A549 (cell line): ENCODE measurements at regions of chr2 and their contacts with region 1.

Region 1: GRCh38 chr2:18378020-18378653 is 182.3 kb downstream of the RDH14 start:
- DNase-seq: peak; percentile 54 to 55
- ATAC-seq: peak; percentile 78 to 95
- H3K4me3 ChIP-seq: no peak overlapping the region
- H3K27ac ChIP-seq: 0 out of 6 replicates have a peak overlapping the region, but pooled peaks of 1 of the 2 experiments have one; percentile 20
- H3K4me1 ChIP-seq: peaks cover 3% of the 10 kb centered on the region; the same call in 1 of the 3 replicates
- CTCF ChIP-seq: peak; percentile 96
- EP300 ChIP-seq: no peak
- POLR2A ChIP-seq: no peak
- RAD21 ChIP-seq: peak; percentile 97

Region 2: DNA sequence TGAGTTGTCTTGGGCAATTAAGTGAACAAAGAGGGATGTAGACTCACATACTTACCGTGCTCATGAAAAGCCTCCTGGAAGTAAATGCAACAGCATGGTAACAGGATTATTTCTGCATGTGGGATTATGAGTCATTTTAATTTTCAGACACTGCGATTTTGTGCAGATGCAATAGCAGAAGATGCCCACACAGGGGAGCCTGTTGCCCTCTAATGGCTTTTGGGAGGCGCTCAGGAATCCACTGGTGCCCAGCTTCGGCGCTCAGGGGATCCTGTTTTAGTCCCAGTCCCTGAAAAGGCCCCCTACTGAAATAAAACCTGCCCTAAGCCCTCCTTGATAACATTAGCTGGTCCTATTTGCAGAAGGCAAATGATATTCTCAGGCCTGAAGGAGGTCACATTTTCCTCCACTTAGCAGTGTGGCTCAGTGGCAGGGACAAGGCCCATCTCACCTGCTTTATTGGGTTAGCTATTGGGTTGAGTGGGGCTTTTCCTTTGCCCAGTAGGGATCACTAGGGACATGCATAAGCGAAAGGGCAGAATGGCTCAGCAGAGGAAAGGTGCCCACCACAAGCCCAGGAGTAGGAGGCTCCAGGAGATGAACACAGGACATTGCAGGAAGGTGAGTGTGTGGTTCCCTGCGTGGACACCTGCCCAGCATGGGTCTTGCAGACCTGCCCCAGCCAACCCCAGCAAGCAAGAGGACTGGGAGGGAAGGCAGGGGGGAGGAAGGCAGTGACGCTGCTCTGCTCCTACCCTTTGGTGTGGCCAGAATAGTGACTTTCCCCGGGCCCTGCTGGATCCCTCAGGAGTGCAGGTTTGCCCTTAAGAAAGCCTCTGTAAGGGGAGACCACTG is 526.2 kb before region 1 on chr2:
- CTCF ChIA-PET with region 1: interaction called, 156 read pairs
- POLR2A ChIA-PET with region 1: no interaction called
- DNase-seq: peak; percentile 64 to 71
- ATAC-seq: peak; percentile 79 to 91
- H3K4me3 ChIP-seq: no peak overlapping the region
- H3K27ac ChIP-seq: no peak overlapping the region
- H3K4me1 ChIP-seq: no peaks in the 10 kb centered on the region
- CTCF ChIP-seq: peak; percentile 94
- EP300 ChIP-seq: no peak
- POLR2A ChIP-seq: no peak
- RAD21 ChIP-seq: peak; percentile 96 to 98

Region 3: DNA sequence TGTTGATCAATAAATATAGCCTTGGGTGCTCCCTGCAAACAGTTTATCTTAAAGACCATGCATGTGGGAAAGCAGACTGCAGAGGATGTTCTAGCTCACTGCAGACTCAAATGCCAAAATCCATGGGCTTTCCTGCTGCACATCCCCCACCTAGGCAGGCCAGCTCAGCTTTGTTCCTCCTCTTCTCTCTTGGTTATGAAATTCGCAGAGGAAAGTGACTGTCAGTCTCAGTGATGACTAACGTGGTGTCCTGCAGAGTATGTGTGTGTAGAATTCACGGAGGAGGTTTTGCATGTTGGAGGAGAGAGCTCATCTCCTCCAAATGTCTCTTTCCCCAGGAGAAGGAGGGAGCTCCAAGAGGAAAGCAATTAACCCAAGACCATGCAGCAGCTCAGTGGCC is 521.1 kb before region 1 on chr2:
- CTCF ChIA-PET with region 1: interaction called, 156 read pairs
- POLR2A ChIA-PET with region 1: no interaction called
- DNase-seq: peak in 1 of 2 experiments; percentile 14
- ATAC-seq: peak; percentile 52 to 54; a peak in 5 of 6 replicates
- H3K4me3 ChIP-seq: no peak overlapping the region
- H3K27ac ChIP-seq: no peak overlapping the region
- H3K4me1 ChIP-seq: no peaks in the 10 kb centered on the region
- CTCF ChIP-seq: no peak
- EP300 ChIP-seq: no peak
- POLR2A ChIP-seq: no peak
- RAD21 ChIP-seq: no peak

Region 4: GRCh38 chr2:18096836-18097405 is 281.2 kb before region 1 on chr2:
- CTCF ChIA-PET with region 1: no interaction called
- POLR2A ChIA-PET with region 1: no interaction called
- DNase-seq: no peak
- ATAC-seq: no peak
- H3K4me3 ChIP-seq: no peak overlapping the region
- H3K27ac ChIP-seq: no peak overlapping the region
- H3K4me1 ChIP-seq: no peaks in the 10 kb centered on the region
- CTCF ChIP-seq: no peak
- EP300 ChIP-seq: no peak
- POLR2A ChIP-seq: no peak
- RAD21 ChIP-seq: no peak

Region 5: GRCh38 chr2:18253686-18254197 is 124.4 kb before region 1 on chr2:
- CTCF ChIA-PET with region 1: no interaction called
- POLR2A ChIA-PET with region 1: no interaction called
- DNase-seq: no peak
- ATAC-seq: no peak
- H3K4me3 ChIP-seq: no peak overlapping the region
- H3K27ac ChIP-seq: no peak overlapping the region
- H3K4me1 ChIP-seq: no peaks in the 10 kb centered on the region
- CTCF ChIP-seq: no peak
- EP300 ChIP-seq: no peak
- POLR2A ChIP-seq: no peak
- RAD21 ChIP-seq: no peak

Region 6: DNA sequence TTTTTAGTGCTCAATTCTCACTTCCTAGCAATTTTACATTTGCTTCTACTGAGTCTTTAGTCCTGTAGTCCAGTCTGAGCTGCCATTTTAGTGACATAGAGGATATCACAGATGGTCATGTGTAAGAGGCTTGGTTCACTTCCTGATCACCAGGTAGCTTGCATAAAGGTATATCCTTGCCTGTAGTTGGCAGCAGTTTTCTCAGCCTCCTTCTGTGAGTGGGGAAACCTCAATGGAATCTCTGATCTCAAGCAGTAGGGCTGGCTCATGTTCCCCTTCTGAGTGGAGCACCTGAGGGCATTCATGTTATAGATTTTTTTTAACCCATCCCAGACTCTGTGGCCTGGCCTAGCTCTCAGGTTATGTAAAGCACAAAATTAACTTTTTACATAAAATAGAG is 96.1 kb before region 1 on chr2:
- CTCF ChIA-PET with region 1: no interaction called
- POLR2A ChIA-PET with region 1: no interaction called
- DNase-seq: no peak
- ATAC-seq: no peak
- H3K4me3 ChIP-seq: no peak overlapping the region
- H3K27ac ChIP-seq: no peak overlapping the region
- H3K4me1 ChIP-seq: no peaks in the 10 kb centered on the region
- CTCF ChIP-seq: no peak
- EP300 ChIP-seq: no peak
- POLR2A ChIP-seq: no peak
- RAD21 ChIP-seq: no peak